HEK293 (cell line): ENCODE measurements at regions of chr6 and their contacts with region 1.

Region 1: GRCh38 chr6:122869437-122870024 is 80.5 kb downstream of the SMPDL3A start:
- H3K4me3 ChIP-seq: no peak overlapping the region
- H3K27ac ChIP-seq: no peak overlapping the region
- H3K4me1 ChIP-seq: no peaks in the 10 kb centered on the region
- CTCF ChIP-seq: peak; percentile 59

Region 2: DNA sequence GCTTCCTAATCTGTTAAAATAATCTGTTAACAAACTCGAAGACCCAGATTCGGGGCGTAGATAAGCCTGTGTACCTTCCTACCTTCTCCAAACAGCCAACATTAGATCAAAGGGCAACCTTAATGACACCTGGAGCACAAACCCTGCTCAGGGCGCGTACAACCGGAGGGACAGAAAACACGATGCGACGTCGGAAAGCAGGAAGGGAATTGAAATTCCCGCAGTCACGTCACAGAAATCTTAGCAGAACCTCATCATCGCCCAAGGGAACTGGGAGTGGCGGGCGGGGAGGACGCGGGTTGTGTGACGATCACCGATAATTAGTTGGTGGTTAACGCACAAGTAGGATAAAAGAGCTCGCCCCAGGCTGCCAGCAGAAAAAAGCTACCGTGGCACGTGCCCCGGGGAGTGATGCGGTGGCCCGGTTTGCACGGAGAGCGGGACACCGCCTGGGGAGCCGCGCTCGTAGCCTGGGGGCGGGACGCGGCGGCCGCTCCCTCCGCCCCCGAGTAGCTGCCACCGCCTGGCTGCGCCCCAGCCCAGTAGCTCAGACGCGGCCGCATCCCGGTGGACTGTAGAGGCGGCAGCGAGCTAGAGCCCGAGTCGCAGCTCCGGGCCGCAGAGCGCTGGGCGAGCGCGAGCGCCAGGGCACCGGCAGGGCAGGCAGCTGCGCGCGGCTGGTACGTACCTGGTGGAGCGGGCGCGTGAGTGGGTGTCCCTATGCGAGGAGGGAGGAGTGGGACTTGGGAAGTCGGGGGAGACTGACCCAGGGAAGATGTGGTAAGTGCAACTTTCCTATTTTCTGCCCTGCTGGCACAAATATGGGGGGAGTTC is 259.5 kb before region 1 on chr6 and contains the start of gene PKIB:
- CTCF ChIA-PET with region 1: no interaction called
- POLR2A ChIA-PET with region 1: no interaction called
- H3K4me3 ChIP-seq: peak within 1 kb of the TSS; percentile 77
- H3K27ac ChIP-seq: peak within 1 kb of the TSS; percentile 57; the same call in 1 of the 2 replicates
- H3K4me1 ChIP-seq: no peaks in the 10 kb centered on the region
- CTCF ChIP-seq: peak; percentile 81; the same call in 1 of the 2 replicates

Region 3: DNA sequence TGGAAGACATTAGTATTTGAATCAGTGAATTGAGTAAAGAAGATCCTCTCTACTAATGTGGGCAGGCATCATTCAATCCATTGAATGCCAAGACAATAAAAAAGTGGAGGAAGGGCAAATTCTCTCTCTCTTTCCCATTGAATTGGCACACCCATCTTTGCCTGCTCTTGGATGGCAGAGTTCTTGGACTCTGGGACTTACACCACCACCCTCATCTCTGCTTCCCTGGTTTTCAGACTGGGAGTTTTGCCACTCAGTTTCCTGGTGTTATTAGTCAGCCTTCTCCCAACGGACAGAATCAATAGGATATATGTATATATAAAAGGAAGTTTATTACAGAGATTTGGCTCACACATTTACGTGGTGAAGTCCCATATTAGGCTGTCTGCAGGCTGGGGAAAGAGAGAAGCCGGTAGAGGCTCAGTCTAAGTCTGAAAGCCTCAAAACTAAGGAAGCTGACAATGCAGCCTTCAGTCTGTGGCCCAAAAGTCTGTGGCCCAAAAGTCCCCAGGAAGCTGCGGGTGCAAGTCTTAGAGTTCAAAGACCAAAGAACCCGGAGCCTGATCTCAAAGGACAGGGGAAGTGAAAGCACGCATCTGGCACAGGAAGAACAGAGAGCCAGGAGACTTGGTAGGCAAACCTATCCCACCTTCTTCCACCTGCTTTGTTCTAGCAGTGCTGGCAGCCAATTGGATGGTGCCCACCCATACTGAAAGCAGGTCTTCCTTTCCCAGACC is 16.1 kb before region 1 on chr6:
- CTCF ChIA-PET with region 1: interaction called, 16 read pairs
- POLR2A ChIA-PET with region 1: no interaction called
- H3K4me3 ChIP-seq: no peak overlapping the region
- H3K27ac ChIP-seq: no peak overlapping the region
- H3K4me1 ChIP-seq: no peaks in the 10 kb centered on the region
- CTCF ChIP-seq: no peak

Region 4: GRCh38 chr6:122886475-122886874 is 16.9 kb after region 1 on chr6:
- CTCF ChIA-PET with region 1: interaction called, 11 read pairs
- POLR2A ChIA-PET with region 1: no interaction called
- H3K4me3 ChIP-seq: no peak overlapping the region
- H3K27ac ChIP-seq: no peak overlapping the region
- H3K4me1 ChIP-seq: no peaks in the 10 kb centered on the region
- CTCF ChIP-seq: no peak

Region 5: DNA sequence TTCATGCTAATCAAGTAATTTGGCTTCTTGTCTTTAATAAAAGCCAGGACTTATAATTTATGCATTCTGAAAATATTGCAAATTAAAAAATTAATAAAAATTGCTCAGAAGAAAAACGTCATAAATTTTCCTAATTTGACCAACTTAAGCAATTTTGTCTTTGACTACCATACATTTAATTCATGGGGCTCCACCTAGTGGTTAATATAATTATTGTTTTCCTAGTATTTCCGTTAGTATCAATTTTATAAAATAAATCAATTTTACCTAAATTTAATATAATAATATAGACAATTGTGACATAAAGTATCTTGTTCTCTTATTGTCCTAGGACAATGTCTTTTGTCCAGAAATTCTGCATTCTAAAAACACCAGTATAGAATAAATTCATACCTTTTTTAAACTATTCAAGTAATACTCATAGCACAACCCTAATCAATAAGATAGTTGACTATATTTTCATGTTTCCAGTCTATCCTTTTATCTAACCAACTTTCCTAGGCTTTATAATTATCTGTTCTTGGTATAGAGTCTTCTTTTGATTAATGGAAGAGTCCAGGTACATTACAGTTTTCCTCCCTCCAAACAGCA is 447.3 kb after region 1 on chr6:
- CTCF ChIA-PET with region 1: interaction called, 31 read pairs
- POLR2A ChIA-PET with region 1: no interaction called
- H3K4me3 ChIP-seq: no peak overlapping the region
- H3K27ac ChIP-seq: no peak overlapping the region
- H3K4me1 ChIP-seq: no peaks in the 10 kb centered on the region
- CTCF ChIP-seq: no peak

Region 6: GRCh38 chr6:123380257-123380656 is 510.7 kb after region 1 on chr6:
- CTCF ChIA-PET with region 1: interaction called, 103 read pairs
- POLR2A ChIA-PET with region 1: no interaction called
- H3K4me3 ChIP-seq: no peak overlapping the region
- H3K27ac ChIP-seq: no peak overlapping the region
- H3K4me1 ChIP-seq: no peaks in the 10 kb centered on the region
- CTCF ChIP-seq: peak; percentile 50; the same call in 1 of the 2 replicates

Region 7: DNA sequence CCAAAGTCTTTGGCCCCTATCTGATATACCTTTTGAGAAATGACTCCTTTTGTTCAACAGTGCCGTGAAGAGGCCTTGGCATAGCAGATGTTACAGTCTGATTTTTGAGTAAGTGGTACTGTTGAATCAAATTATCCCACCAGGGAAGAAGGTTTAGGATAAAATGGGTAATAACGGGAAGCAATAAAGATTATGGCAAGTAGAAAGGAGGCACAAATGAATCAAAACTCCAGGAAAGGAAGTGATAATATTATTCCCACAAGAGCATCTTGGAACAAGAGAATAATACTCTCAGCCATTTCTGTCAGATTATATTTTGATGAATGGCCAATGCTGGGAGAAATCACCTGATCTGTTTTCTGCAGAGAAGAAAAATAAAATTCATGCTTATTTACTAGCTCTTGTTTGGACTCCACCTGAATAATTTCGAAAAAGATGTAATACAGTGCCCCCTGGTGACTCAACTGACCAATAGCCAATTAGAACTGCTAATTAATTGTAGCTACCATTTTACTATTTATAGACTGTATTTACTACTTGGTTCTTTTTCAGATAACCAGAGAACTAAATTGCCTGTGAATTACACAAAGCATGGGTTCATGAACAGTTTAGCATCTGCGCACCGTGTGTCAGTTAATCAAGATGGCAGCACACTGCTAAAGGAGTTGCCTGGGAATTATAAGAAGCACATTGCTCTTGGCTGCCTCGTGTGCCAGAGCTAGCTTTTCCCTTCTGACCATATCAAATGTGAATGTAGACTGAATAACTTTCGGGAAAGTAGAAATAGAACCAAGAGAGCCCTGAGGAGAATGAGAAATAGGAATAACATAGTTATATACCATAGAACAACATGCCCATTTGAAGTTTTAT is 845.7 kb after region 1 on chr6:
- CTCF ChIA-PET with region 1: interaction called, 11 read pairs
- POLR2A ChIA-PET with region 1: no interaction called
- H3K4me3 ChIP-seq: no peak overlapping the region
- H3K27ac ChIP-seq: no peak overlapping the region
- H3K4me1 ChIP-seq: no peaks in the 10 kb centered on the region
- CTCF ChIP-seq: no peak